WTC11 (cell line): ENCODE measurements at regions of chr11 and their contacts with region 1.

Region 1: GRCh38 chr11:69704508-69705253 is 859 bp upstream of the FGF19 start:
- DNase-seq: peak; percentile 94
- ATAC-seq: peak; percentile 38
- H3K4me3 Mint-ChIP-seq: peak overlapping the region; percentile 86
- H3K27ac Mint-ChIP-seq: peak overlapping the region; percentile 96
- H3K4me1 Mint-ChIP-seq: peaks cover 52% of the 10 kb centered on the region
- H3K27me3 Mint-ChIP-seq: peaks cover 7% of the 10 kb centered on the region
- CTCF ChIP-seq: no peak

Region 2: GRCh38 chr11:69670158-69670845 is 34.4 kb before region 1 on chr11:
- CTCF ChIA-PET with region 1: interaction called, 12 read pairs
- POLR2A ChIA-PET with region 1: no interaction called
- DNase-seq: peak; percentile 89
- ATAC-seq: peak; percentile 76
- H3K4me3 Mint-ChIP-seq: no peak overlapping the region
- H3K27ac Mint-ChIP-seq: peak overlapping the region; percentile 86
- H3K4me1 Mint-ChIP-seq: peaks cover 16% of the 10 kb centered on the region
- H3K27me3 Mint-ChIP-seq: no peaks in the 10 kb centered on the region
- CTCF ChIP-seq: peak; percentile 77

Region 3: DNA sequence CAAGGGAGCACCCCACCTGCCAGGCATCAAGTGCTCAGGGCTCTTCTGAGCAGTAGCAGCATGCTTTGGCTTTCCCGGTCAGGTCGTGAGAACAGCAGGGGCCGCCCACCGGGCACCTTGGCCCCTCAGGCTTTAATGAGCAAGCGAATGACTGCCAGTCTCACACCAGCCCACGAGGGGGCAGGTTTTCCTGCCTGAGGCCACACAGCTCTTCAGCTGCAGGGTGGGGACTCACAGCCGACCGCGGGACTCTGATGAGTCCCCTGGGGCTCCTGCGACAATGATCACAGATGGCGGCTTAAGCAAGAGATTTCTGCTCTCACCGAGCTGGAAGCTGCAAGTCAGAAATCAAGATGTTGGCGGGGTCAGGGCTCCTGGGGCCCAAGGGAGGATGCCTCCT is 13.5 kb after region 1 on chr11:
- CTCF ChIA-PET with region 1: interaction called, 50 read pairs
- POLR2A ChIA-PET with region 1: interaction called, 4 read pairs
- DNase-seq: peak; percentile 85
- ATAC-seq: peak; percentile 88
- H3K4me3 Mint-ChIP-seq: no peak overlapping the region
- H3K27ac Mint-ChIP-seq: no peak overlapping the region
- H3K4me1 Mint-ChIP-seq: peaks cover 17% of the 10 kb centered on the region
- H3K27me3 Mint-ChIP-seq: peaks cover 27% of the 10 kb centered on the region
- CTCF ChIP-seq: peak; percentile 75

Region 4: GRCh38 chr11:69841859-69842698 is 137.4 kb after region 1 on chr11:
- CTCF ChIA-PET with region 1: interaction called, 16 read pairs
- POLR2A ChIA-PET with region 1: no interaction called
- DNase-seq: peak; percentile 65
- ATAC-seq: peak; percentile 73
- H3K4me3 Mint-ChIP-seq: no peak overlapping the region
- H3K27ac Mint-ChIP-seq: no peak overlapping the region
- H3K4me1 Mint-ChIP-seq: peaks cover 4% of the 10 kb centered on the region
- H3K27me3 Mint-ChIP-seq: no peaks in the 10 kb centered on the region; the same call in 1 of the 2 replicates
- CTCF ChIP-seq: peak; percentile 37; the same call in 1 of the 2 replicates

Region 5: GRCh38 chr11:69888483-69889076 is 183.9 kb after region 1 on chr11:
- CTCF ChIA-PET with region 1: interaction called, 28 read pairs
- POLR2A ChIA-PET with region 1: interaction called, 3 read pairs
- DNase-seq: peak; percentile 92
- ATAC-seq: peak; percentile 58
- H3K4me3 Mint-ChIP-seq: no peak overlapping the region
- H3K27ac Mint-ChIP-seq: no peak overlapping the region
- H3K4me1 Mint-ChIP-seq: peaks cover 35% of the 10 kb centered on the region
- H3K27me3 Mint-ChIP-seq: peaks cover 31% of the 10 kb centered on the region
- CTCF ChIP-seq: peak; percentile 95